ENCODE measurements at regions of chr10 and their contacts with region 1.

Region 1: GRCh38 chr10:93352638-93353383 is 129.3 kb downstream of the MYOF start:
- DNase-seq: no peak
- H3K4me3 ChIP-seq: no peak overlapping the region
- H3K27ac ChIP-seq: no peak overlapping the region
- H3K4me1 ChIP-seq: no peaks in the 10 kb centered on the region
- H3K27me3 ChIP-seq: no peaks in the 10 kb centered on the region
- CTCF ChIP-seq: peak; percentile 43 to 48

Region 2: GRCh38 chr10:92886334-92886961 is 466.4 kb before region 1 on chr10:
- CTCF ChIA-PET with region 1: no interaction called
- dilution Hi-C with region 1: no loop called
- in situ Hi-C with region 1: loop called in 1 of 2 experiments (anchors 25 kb)
- intact Hi-C with region 1: loop called (anchors 5 kb)
- DNase-seq: peak; percentile 37
- H3K4me3 ChIP-seq: no peak overlapping the region
- H3K27ac ChIP-seq: no peak overlapping the region
- H3K4me1 ChIP-seq: peaks cover 9% of the 10 kb centered on the region
- H3K27me3 ChIP-seq: no peaks in the 10 kb centered on the region
- CTCF ChIP-seq: no peak

Region 3: GRCh38 chr10:93115661-93116383 is 237.0 kb before region 1 on chr10:
- CTCF ChIA-PET with region 1: no interaction called
- dilution Hi-C with region 1: no loop called
- in situ Hi-C with region 1: no loop called
- intact Hi-C with region 1: loop called (anchors 10 kb)
- DNase-seq: peak; percentile 20
- H3K4me3 ChIP-seq: no peak overlapping the region
- H3K27ac ChIP-seq: no peak overlapping the region
- H3K4me1 ChIP-seq: no peaks in the 10 kb centered on the region
- H3K27me3 ChIP-seq: no peaks in the 10 kb centered on the region
- CTCF ChIP-seq: peak; percentile 41 to 59

Region 4: GRCh38 chr10:93299606-93300287 is 53.1 kb before region 1 on chr10:
- CTCF ChIA-PET with region 1: no interaction called
- dilution Hi-C with region 1: loop called (anchors 5 kb)
- in situ Hi-C with region 1: no loop called
- intact Hi-C with region 1: no loop called
- DNase-seq: no peak
- H3K4me3 ChIP-seq: no peak overlapping the region
- H3K27ac ChIP-seq: no peak overlapping the region
- H3K4me1 ChIP-seq: no peaks in the 10 kb centered on the region
- H3K27me3 ChIP-seq: no peaks in the 10 kb centered on the region
- CTCF ChIP-seq: no peak

Region 5: GRCh38 chr10:93368210-93368609 is 15.4 kb after region 1 on chr10:
- CTCF ChIA-PET with region 1: interaction called, 24 read pairs
- dilution Hi-C with region 1: no loop called
- in situ Hi-C with region 1: no loop called
- intact Hi-C with region 1: no loop called
- DNase-seq: no peak
- H3K4me3 ChIP-seq: no peak overlapping the region
- H3K27ac ChIP-seq: no peak overlapping the region
- H3K4me1 ChIP-seq: peaks cover 22% of the 10 kb centered on the region
- H3K27me3 ChIP-seq: no peaks in the 10 kb centered on the region
- CTCF ChIP-seq: no peak

Region 6: GRCh38 chr10:93680412-93681047 is 327.7 kb after region 1 on chr10:
- CTCF ChIA-PET with region 1: no interaction called
- dilution Hi-C with region 1: no loop called
- in situ Hi-C with region 1: loop called in 1 of 2 experiments (anchors 25 kb)
- intact Hi-C with region 1: no loop called
- DNase-seq: peak; percentile 35
- H3K4me3 ChIP-seq: no peak overlapping the region
- H3K27ac ChIP-seq: no peak overlapping the region
- H3K4me1 ChIP-seq: no peaks in the 10 kb centered on the region
- H3K27me3 ChIP-seq: no peaks in the 10 kb centered on the region
- CTCF ChIP-seq: peak; percentile 24 to 44

Measured in mammary epithelial cell (primary cell).